Aorta (tissue), 5 donors: ENCODE measurements at regions of chr2 and their contacts with region 1.

Region 1: DNA sequence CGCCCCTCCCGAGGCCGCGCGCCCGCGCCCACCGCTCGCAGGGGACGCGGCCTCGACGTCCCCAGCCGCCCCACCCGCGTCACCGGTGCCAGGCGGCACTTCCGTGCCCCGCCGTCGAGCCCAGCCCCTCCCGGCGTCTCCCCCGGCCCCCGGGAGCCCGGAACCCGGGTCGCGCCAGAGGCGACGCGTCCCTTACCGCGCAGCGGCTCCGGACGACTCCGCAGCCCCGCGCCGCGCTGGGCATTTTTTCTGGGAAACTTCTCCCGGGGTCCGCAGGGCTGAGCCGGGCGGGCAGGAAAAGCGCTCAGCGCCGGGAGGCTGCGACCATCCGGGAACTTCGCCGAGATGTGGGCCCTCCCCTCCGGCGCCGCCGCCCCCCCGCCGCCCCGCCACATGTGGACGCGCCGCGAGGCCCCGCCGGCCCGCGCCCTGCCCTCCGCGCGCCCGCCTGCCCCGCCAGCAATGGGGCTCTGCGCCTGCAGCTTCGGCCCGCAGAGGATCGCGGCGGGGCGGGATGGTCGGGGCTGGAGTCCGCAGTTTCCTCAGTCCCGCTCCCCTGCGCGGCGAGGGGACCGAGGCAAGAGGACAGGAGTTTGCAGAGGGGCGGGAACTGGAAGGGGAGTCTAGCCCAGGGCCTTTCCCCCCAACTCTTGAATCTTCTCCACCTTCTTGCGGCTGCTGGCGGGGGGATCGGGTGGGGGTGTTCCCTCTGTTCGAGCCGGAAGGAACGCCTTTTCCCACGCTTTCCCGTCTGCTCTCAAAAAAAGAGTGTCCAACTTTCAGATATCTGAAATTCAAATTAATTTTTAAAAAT is 81.5 kb downstream of the CHRNA1 start:
- DNase-seq: peak; percentile 83 to 94
- ATAC-seq: peak; percentile 88
- H3K4me3 ChIP-seq: peak overlapping the region; percentile 85 to 86
- H3K27ac ChIP-seq: peak overlapping the region; percentile 69 to 81
- H3K4me1 ChIP-seq: peaks cover 0 to 4% of the 10 kb centered on the region in 2 donors
- H3K27me3 ChIP-seq: no peaks in the 10 kb centered on the region

Region 2: DNA sequence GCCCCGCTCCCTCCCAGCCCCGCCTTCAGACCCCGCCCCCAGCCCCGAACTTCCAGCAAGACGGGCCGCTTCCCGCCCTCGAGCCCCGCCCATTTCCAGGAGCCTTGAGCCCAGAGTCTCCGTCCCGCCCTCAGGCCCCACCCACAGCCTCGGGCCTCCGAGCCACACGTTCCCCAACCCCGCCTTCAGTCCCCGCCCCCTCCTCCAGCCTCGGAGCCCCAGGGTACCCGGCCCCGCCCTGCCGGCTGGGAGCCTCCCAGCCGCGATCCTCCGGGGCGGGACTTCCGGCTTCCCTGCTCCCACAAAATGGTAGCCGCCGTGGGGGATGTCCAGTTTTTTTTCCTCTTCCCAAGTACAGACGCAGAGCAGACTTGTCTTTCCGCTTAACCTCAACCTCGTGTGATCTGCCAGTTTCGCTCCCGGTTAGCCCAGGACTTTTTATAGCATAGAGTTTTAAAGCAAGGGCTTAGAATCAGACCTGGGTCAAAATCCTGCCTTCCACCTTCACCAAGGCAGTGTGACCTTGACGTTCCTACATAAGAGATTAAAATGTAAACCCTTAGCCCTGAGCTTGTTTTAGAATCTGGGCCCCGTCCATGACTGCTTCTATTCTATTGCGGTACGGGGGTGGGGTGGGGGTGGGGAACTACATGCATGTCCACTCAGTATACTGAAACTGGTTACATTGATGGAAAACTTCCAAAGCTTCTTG is 195.5 kb before region 1 on chr2:
- intact Hi-C with region 1: loop called in 1 of 2 experiments (anchors 5 kb)
- DNase-seq: peak; percentile 100
- ATAC-seq: peak; percentile 99
- H3K4me3 ChIP-seq: peak overlapping the region; percentile 60 to 96
- H3K27ac ChIP-seq: peak overlapping the region in 1 of 2 donors; percentile 69
- H3K4me1 ChIP-seq: no peaks in the 10 kb centered on the region
- H3K27me3 ChIP-seq: no peaks in the 10 kb centered on the region

Region 3: GRCh38 chr2:174615871-174616436 is 66.8 kb before region 1 on chr2:
- intact Hi-C with region 1: loop called (anchors 1 to 5 kb)
- DNase-seq: no peak
- ATAC-seq: peak; percentile 21
- H3K4me3 ChIP-seq: no peak overlapping the region
- H3K27ac ChIP-seq: peak overlapping the region; percentile 30 to 36
- H3K4me1 ChIP-seq: peaks cover 0 to 2% of the 10 kb centered on the region in 2 donors
- H3K27me3 ChIP-seq: no peaks in the 10 kb centered on the region